Tibial artery (tissue), 4 donors: ENCODE measurements at regions of chr20 and their contacts with region 1.

Region 1: GRCh38 chr20:34849778-34850177 is 22.9 kb downstream of the GGT7 start:
- DNase-seq: no peak
- H3K4me3 ChIP-seq: no peak overlapping the region
- H3K27ac ChIP-seq: no peak overlapping the region
- H3K4me1 ChIP-seq: no peaks in the 10 kb centered on the region
- H3K27me3 ChIP-seq: no peaks in the 10 kb centered on the region
- CTCF ChIP-seq: no peak

Region 2: GRCh38 chr20:34927736-34928135 is 78.0 kb after region 1 on chr20:
- intact Hi-C with region 1: no loop called
- DNase-seq: no peak
- H3K4me3 ChIP-seq: no peak overlapping the region
- H3K27ac ChIP-seq: peak overlapping the region; percentile 40 to 50
- H3K4me1 ChIP-seq: peaks cover 0 to 20% (median 9%) of the 10 kb centered on the region in 4 donors
- H3K27me3 ChIP-seq: no peaks in the 10 kb centered on the region
- CTCF ChIP-seq: no peak

Region 3: GRCh38 chr20:35166242-35166830 is 316.6 kb after region 1 on chr20:
- intact Hi-C with region 1: no loop called
- DNase-seq: peak; percentile 54 to 73
- H3K4me3 ChIP-seq: no peak overlapping the region
- H3K27ac ChIP-seq: no peak overlapping the region
- H3K4me1 ChIP-seq: peaks cover 0 to 2% (median 0%) of the 10 kb centered on the region in 4 donors
- H3K27me3 ChIP-seq: no peaks in the 10 kb centered on the region
- CTCF ChIP-seq: no peak

Region 4: GRCh38 chr20:35199748-35200162 is 350.0 kb after region 1 on chr20:
- intact Hi-C with region 1: loop called (anchors 10 kb)
- DNase-seq: no peak
- H3K4me3 ChIP-seq: no peak overlapping the region
- H3K27ac ChIP-seq: no peak overlapping the region
- H3K4me1 ChIP-seq: no peaks in the 10 kb centered on the region
- H3K27me3 ChIP-seq: no peaks in the 10 kb centered on the region
- CTCF ChIP-seq: no peak

Region 5: GRCh38 chr20:35575970-35576623 is 726.3 kb after region 1 on chr20:
- intact Hi-C with region 1: no loop called
- DNase-seq: peak in 1 of 2 donors; percentile 5
- H3K4me3 ChIP-seq: no peak overlapping the region
- H3K27ac ChIP-seq: no peak overlapping the region
- H3K4me1 ChIP-seq: no peaks in the 10 kb centered on the region
- H3K27me3 ChIP-seq: peaks cover 0 to 7% of the 10 kb centered on the region in 2 donors
- CTCF ChIP-seq: no peak